ENCODE measurements at regions of chr1 and their contacts with region 1.

Region 1: DNA sequence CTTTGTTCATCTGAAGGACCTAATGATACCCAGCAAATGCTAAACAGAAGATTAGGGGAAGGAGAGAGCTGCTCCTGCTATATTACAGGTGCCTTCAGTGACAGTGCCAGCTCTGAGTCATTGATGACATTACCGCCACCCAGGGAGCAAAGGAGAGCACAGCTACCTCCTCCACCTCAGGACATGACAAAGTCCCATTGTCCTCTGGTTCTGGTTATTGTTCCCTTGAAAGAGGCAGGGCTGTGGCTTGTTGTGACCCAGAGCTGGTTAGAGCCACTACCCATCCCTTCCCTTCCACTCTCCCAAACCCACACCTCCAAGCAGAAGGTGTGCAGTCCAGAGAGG is 363.5 kb upstream of the DUSP10 start:
- DNase-seq: no peak
- ATAC-seq: peak in 3 of 4 donors; percentile 50 to 74 (median 63)
- H3K4me3 ChIP-seq: no peak overlapping the region
- H3K27ac ChIP-seq: no peak overlapping the region
- H3K4me1 ChIP-seq: peaks cover 0 to 18% (median 0%) of the 10 kb centered on the region in 12 donors
- H3K27me3 ChIP-seq: peaks cover 0 to 7% (median 0%) of the 10 kb centered on the region in 9 donors
- CTCF ChIP-seq: no peak
- POLR2A ChIP-seq: no peak

Region 2: GRCh38 chr1:222034790-222035189 is 70.6 kb before region 1 on chr1:
- intact Hi-C with region 1: loop called in 1 of 10 experiments (anchors 5 kb)
- DNase-seq: no peak
- ATAC-seq: peak in 2 of 4 donors; percentile 52 to 55
- H3K4me3 ChIP-seq: no peak overlapping the region
- H3K27ac ChIP-seq: no peak overlapping the region
- H3K4me1 ChIP-seq: peaks cover 0 to 18% (median 8%) of the 10 kb centered on the region in 12 donors
- H3K27me3 ChIP-seq: no peaks in the 10 kb centered on the region
- CTCF ChIP-seq: no peak
- POLR2A ChIP-seq: no peak

Region 3: GRCh38 chr1:222233444-222234158 is 128.2 kb after region 1 on chr1:
- intact Hi-C with region 1: no loop called
- DNase-seq: no peak
- ATAC-seq: no peak
- H3K4me3 ChIP-seq: no peak overlapping the region
- H3K27ac ChIP-seq: no peak overlapping the region
- H3K4me1 ChIP-seq: no peaks in the 10 kb centered on the region
- H3K27me3 ChIP-seq: peaks cover 0 to 12% (median 0%) of the 10 kb centered on the region in 9 donors
- CTCF ChIP-seq: no peak
- POLR2A ChIP-seq: no peak

Measured in heart left ventricle (tissue), 16 donors.